Aorta (tissue), 5 donors: ENCODE measurements at regions of chr7 and their contacts with region 1.

Region 1: GRCh38 chr7:84735011-84735410 is 451.8 kb downstream of the SEMA3D start:
- DNase-seq: no peak
- ATAC-seq: no peak
- H3K4me3 ChIP-seq: no peak overlapping the region
- H3K27ac ChIP-seq: no peak overlapping the region
- H3K4me1 ChIP-seq: peaks cover 2% of the 10 kb centered on the region in 2 donors
- H3K27me3 ChIP-seq: no peaks in the 10 kb centered on the region

Region 2: DNA sequence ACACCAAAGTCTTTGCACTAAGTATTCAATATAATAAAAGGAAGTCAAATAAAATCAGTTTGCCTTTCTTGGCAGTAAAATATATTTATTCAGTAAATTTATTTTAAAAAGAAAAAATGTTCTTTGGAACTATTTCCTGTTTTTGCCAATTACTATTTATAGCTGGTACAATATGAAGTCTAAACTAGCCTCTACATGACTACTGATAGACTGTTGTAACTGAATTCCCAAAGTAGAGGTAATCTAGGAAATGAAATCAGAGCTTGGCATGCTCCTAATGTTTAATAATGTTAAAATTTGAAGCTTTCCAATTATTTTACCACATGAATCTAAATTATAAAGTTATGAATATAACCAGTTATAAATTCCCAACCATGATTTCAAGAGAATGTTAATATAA is 66.4 kb after region 1 on chr7:
- intact Hi-C with region 1: loop called in 1 of 2 experiments (anchors 10 kb)
- DNase-seq: no peak
- ATAC-seq: no peak
- H3K4me3 ChIP-seq: no peak overlapping the region
- H3K27ac ChIP-seq: no peak overlapping the region
- H3K4me1 ChIP-seq: no peaks in the 10 kb centered on the region
- H3K27me3 ChIP-seq: no peaks in the 10 kb centered on the region